ENCODE measurements at regions of chr15 and their contacts with region 1.

Region 1: GRCh38 chr15:82540055-82540983 is at the start of gene RPS17:
- DNase-seq: peak; percentile 89
- H3K4me3 ChIP-seq: peak within 1 kb of the TSS; percentile 99
- H3K27ac ChIP-seq: peak within 1 kb of the TSS; percentile 91
- H3K27me3 ChIP-seq: no peaks in the 10 kb centered on the region
- CTCF ChIP-seq: peak; percentile 96
- polyA plus RNA-seq, gene RPS17: 4,215 and 4,363 TPM in 2 replicates

Region 2: DNA sequence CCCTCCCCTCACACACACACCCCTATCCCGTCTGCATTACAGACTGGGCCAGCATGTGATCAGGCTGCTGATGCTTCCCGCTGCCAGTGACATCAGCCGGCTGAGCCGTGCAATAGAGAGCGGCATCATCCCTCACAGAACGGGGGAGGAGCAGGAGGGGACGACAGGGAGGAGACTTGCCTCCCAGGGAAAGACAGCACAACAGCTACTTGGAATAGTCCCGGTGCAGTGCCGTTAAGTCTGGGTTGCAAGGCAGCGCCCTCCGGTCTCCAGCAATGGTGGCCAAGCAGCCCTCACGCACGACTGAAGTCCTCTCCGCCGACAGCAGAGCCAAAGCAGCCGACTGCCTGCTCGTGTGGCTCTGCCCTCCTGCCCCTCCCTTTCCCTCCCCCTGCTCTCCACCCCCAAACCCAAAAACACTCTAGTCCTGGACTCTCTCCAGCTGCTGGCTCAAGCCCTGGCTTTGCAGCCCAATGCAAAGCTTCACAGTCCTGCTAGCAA is 31.5 kb after region 1 on chr15:
- CTCF ChIA-PET with region 1: interaction called, 11 read pairs
- POLR2A ChIA-PET with region 1: interaction called, 18 read pairs
- DNase-seq: peak; percentile 39
- H3K4me3 ChIP-seq: peak overlapping the region; percentile 62
- H3K27ac ChIP-seq: peak overlapping the region; percentile 69
- H3K27me3 ChIP-seq: peaks cover 2% of the 10 kb centered on the region
- CTCF ChIP-seq: no peak

Region 3: DNA sequence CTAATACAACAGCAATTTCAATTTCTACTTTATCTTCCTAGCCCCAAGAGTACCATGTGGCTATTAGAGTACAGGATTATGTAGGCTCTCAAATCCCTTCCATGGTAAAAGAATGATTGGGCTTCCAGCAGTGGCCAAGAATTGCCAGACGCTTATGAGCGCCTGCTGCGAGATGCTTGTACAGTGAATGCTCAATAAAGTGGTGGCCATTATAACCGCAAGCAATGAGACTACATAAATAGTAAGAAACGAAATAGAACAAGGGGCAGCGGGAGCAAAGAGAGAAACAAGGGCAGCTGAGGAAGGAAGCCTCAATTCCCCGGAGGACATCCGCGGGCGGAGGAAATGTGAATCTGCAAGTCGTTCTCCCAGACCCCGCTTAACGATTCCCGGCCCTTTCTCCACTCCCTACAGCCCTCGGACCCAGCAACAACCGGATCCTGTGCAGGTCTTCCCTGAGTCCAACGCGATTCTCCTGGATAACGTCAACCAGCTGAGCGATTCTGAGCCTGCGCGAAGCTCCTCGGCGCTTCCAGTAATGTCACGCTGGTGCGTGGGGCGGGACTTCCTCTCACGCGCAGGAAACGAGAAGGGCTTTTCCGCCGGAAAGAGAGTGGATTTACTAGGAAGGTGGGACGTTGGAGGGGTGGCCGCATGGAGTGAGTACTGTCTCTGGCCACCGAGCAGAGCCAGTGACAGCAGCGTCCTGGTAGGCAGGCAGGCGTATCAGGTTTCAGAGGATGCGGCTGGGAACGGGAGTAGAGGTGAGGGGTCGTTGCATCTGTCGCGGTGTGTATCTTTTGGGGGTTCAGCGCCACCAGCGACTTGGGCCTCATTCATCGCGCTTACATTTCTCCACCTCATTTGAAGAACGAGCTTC is 209.9 kb after region 1 on chr15:
- CTCF ChIA-PET with region 1: interaction called, 5 read pairs
- POLR2A ChIA-PET with region 1: interaction called, 22 read pairs
- DNase-seq: peak; percentile 89
- H3K4me3 ChIP-seq: peak overlapping the region; percentile 98
- H3K27ac ChIP-seq: peak overlapping the region; percentile 92
- H3K27me3 ChIP-seq: no peaks in the 10 kb centered on the region
- CTCF ChIP-seq: no peak

Region 4: DNA sequence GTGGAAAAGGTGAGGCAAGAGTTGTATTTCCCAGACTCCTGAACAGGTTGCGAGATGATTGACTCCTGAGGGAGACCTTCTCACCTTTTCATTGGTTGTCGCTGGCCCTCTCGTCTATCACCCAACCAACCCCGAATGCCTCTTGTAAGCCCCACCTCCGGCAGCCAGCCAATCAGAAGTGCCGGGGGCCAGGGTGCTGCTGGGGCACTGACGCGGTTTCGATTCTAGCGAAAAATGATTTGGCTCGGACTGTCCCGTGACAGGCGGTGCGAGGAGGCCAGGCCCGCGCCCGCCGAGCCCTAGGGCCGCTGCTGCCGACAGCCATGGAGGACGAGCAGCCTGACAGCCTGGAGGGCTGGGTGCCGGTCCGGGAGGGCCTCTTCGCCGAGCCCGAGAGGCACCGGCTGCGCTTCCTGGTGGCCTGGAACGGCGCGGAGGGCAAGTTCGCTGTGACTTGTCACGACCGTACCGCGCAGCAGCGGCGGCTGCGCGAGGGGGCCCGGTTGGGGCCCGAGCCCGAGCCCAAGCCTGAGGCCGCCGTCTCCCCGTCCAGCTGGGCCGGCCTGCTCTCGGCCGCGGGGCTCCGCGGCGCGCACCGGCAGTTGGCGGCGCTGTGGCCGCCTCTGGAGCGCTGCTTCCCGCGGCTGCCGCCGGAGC is 269.2 kb after region 1 on chr15 and contains the start of gene WHAMM:
- CTCF ChIA-PET with region 1: interaction called, 8 read pairs
- POLR2A ChIA-PET with region 1: interaction called, 10 read pairs
- DNase-seq: peak; percentile 94
- H3K4me3 ChIP-seq: peak within 1 kb of the TSS; percentile 90
- H3K27ac ChIP-seq: peak within 1 kb of the TSS; percentile 90
- H3K27me3 ChIP-seq: no peaks in the 10 kb centered on the region
- CTCF ChIP-seq: 0 out of 2 replicates have a peak, but pooled peaks have one; percentile 1
- polyA plus RNA-seq, gene WHAMM: 3.1 and 3.6 TPM in 2 replicates

Region 5: GRCh38 chr15:82849556-82850512 is 309.5 kb after region 1 on chr15:
- CTCF ChIA-PET with region 1: no interaction called
- POLR2A ChIA-PET with region 1: interaction called, 14 read pairs
- DNase-seq: no peak
- H3K4me3 ChIP-seq: no peak overlapping the region
- H3K27ac ChIP-seq: no peak overlapping the region
- H3K27me3 ChIP-seq: no peaks in the 10 kb centered on the region
- CTCF ChIP-seq: peak; percentile 64

Region 6: DNA sequence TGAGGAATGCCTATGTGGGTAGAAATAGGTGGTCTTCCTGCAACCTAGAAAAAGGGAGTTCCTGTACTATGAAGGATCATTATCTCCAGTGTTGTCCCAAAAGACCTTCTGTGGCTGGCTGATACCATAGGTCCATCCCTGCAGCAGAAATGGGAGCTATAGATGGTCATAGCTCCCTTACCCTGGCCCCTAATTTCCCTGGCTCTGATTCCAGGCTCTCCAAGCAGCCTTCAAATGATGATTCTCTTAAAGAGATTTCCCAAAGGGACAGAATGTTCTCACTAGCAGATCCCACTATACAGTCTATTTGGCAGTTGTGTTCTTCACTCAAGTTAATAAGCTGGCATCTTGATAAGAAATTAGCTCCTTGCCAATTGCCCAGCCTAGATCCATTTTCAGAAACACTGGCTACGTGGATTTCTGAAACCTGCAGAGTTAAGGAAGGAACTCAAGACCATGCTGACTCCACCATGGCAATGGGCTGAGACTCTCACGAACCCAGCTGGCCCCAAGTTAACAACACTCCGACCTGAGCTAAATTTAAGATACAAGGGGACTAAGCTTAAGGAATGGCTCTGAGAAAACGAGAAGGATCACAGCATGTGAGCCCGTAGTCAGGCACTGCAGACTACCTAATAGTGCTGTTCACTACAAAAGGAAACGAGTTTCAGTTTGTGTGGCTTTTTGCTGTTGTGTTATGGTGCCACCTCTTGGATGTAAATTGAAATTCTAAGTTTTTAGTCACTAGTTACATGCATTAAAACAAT is 459.8 kb after region 1 on chr15:
- CTCF ChIA-PET with region 1: interaction called, 16 read pairs
- POLR2A ChIA-PET with region 1: interaction called, 5 read pairs
- DNase-seq: no peak
- H3K4me3 ChIP-seq: peak overlapping the region; percentile 45
- H3K27ac ChIP-seq: no peak overlapping the region
- H3K27me3 ChIP-seq: no peaks in the 10 kb centered on the region
- CTCF ChIP-seq: peak; percentile 55

Region 7: DNA sequence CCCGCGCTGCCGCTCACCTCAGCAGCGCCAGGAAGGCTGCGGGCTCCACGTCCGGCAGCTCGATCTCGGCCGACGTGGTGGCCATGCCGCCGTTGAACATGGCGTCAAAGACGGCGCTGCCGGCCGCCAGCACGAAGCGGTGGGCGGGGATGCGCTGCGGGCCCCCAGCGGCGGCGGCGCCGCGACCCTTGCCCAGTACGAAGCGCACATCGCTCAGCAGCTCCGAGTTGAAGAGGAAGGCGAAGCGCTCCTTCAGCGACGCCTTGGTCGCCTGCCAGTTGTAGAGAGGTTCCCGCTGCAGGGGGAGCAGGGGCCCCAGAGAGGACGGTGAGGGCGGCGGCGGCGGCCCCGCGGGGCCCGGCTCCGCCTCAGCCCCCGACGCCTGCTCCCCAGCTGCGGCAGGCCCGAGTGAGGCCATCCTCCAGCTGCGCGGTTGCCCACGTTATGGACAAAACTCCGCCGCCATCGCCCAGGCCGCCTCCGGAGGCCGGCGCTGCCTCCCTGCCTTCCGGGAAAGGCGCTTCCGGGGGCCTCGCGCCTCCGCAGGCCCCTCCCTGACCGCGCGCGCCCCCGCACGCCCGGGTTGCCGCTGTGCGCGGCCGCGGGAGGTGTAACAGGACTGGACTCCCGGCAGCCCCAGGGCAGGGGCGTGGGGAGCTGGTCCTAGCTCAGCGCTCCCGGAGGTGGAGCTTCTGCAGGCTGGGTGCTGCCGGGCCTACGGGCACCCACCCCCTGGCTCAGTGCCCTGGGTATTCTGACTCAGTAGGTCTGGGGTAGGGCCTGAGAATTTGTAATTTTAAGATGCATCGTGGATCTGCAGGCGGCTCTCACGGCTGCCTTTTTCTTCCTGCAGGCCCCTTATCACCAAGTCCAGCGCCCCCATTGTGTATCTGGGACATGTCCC is 526.7 kb after region 1 on chr15 and contains the start of gene BTBD1:
- CTCF ChIA-PET with region 1: no interaction called
- POLR2A ChIA-PET with region 1: interaction called, 10 read pairs
- DNase-seq: peak; percentile 90
- H3K4me3 ChIP-seq: peak within 1 kb of the TSS; percentile 89
- H3K27ac ChIP-seq: peak within 1 kb of the TSS; percentile 67
- H3K27me3 ChIP-seq: no peaks in the 10 kb centered on the region
- CTCF ChIP-seq: no peak
- polyA plus RNA-seq, gene BTBD1: 89.8 and 113 TPM in 2 replicates

Measured in AG04450 (cell line).